ENCODE measurements at regions of chr3 and their contacts with region 1.

Region 1: GRCh38 chr3:142649996-142650693 is 54.0 kb downstream of the PLS1 start:
- DNase-seq: no peak
- ATAC-seq: no peak
- H3K4me3 ChIP-seq: no peak overlapping the region
- H3K4me3 Mint-ChIP-seq: no peak overlapping the region
- H3K27ac ChIP-seq: no peak overlapping the region
- H3K27ac Mint-ChIP-seq: no peak overlapping the region
- H3K4me1 ChIP-seq: no peaks in the 10 kb centered on the region
- H3K4me1 Mint-ChIP-seq: no peaks in the 10 kb centered on the region
- H3K27me3 ChIP-seq: no peaks in the 10 kb centered on the region
- H3K27me3 Mint-ChIP-seq: no peaks in the 10 kb centered on the region
- CTCF ChIP-seq: no peak

Region 2: DNA sequence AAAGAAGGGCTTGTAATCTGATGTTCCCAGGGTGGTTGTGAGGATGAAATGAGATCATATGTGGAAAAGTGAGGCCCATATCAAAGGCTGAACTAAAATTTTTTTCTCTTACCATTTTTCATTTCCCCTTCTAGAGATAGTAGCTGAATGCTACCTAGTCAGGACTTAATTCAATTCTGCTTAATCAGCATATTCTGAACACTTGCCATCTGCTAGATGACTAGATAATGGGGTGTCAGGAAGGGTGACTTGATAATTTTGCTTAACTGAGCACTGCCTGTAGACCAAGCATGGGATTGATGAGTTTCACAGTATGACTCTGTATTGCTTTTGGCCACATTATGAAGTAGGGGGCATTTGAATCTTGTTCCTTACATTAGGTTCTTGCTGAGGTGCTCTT is 605.6 kb after region 1 on chr3:
- CTCF ChIA-PET with region 1: no interaction called
- POLR2A ChIA-PET with region 1: no interaction called
- intact Hi-C with region 1: loop called in 1 of 2 experiments (anchors 5 kb)
- DNase-seq: no peak
- ATAC-seq: no peak
- H3K4me3 ChIP-seq: no peak overlapping the region
- H3K4me3 Mint-ChIP-seq: no peak overlapping the region
- H3K27ac ChIP-seq: no peak overlapping the region
- H3K27ac Mint-ChIP-seq: no peak overlapping the region
- H3K4me1 ChIP-seq: no peaks in the 10 kb centered on the region
- H3K4me1 Mint-ChIP-seq: no peaks in the 10 kb centered on the region
- H3K27me3 ChIP-seq: no peaks in the 10 kb centered on the region
- H3K27me3 Mint-ChIP-seq: no peaks in the 10 kb centered on the region
- CTCF ChIP-seq: no peak